Brain microvascular endothelial cell (primary cell): ENCODE measurements at regions of chr18 and their contacts with region 1.

Region 1: GRCh38 chr18:46660955-46661749 is 4.1 kb upstream of the LOXHD1 start:
- DNase-seq: no peak
- H3K4me3 ChIP-seq: no peak overlapping the region
- H3K27ac ChIP-seq: no peak overlapping the region
- H3K27me3 ChIP-seq: no peaks in the 10 kb centered on the region
- CTCF ChIP-seq: no peak

Region 2: DNA sequence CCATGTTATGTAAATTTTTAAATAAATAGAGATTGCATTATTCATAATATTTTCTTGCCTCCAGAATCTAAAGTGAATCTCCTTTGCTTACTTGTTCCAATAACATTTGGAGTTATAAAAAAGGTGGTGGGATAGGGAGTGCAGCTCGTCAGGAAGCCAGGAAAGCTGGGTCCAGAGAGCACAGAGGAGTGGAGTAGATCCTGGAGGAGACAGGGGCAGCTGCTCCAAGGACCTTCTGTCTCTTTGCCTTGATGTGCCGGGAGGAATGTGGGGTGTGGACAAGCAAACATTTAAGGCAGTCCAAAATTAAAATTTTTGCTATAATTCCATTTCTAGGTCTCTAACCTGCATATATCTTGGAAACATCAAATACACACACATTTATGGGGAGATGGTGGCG is 527.6 kb before region 1 on chr18:
- in situ Hi-C with region 1: no loop called
- DNase-seq: no peak
- H3K4me3 ChIP-seq: no peak overlapping the region
- H3K27ac ChIP-seq: no peak overlapping the region
- H3K27me3 ChIP-seq: no peaks in the 10 kb centered on the region
- CTCF ChIP-seq: no peak

Region 3: GRCh38 chr18:46173393-46174341 is 487.5 kb before region 1 on chr18:
- in situ Hi-C with region 1: loop called (anchors 25 kb)
- DNase-seq: peak; percentile 84
- H3K4me3 ChIP-seq: peak overlapping the region; percentile 91
- H3K27ac ChIP-seq: peak overlapping the region; percentile 64
- H3K27me3 ChIP-seq: no peaks in the 10 kb centered on the region
- CTCF ChIP-seq: peak; percentile 99